ENCODE measurements at regions of chr3 and their contacts with region 1.

Region 1: DNA sequence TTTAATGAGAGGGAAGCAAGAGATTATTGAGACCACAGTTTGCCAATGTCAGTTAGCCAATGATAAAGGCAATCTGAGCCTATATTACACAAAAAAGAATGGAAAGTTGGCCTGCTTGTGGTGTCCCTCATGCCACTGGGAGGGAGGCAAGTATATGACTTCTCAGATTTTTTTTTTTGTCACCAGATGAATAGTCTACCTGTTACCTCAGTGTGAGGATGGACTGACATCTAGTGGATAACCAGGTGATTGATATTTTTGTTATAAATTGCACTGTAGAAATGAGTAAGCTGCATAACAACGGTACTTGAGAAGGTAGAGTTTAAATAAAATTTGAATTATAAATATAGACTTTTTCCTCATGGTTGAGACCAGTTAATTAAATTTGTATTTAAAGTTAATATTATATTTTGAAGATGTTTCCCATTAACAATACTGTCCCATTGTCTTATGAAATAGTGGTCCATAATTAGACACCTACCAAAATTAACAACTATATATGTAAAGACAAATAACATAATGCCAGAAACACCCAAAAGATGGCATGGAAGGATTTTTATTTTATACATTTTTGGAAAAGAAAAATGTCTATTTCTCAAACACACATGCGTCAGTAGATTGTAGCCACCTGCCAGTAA is 237.8 kb upstream of the GADL1 start:
- DNase-seq: peak; percentile 38
- H3K4me3 ChIP-seq: no peak overlapping the region
- CTCF ChIP-seq: peak; percentile 41

Region 2: DNA sequence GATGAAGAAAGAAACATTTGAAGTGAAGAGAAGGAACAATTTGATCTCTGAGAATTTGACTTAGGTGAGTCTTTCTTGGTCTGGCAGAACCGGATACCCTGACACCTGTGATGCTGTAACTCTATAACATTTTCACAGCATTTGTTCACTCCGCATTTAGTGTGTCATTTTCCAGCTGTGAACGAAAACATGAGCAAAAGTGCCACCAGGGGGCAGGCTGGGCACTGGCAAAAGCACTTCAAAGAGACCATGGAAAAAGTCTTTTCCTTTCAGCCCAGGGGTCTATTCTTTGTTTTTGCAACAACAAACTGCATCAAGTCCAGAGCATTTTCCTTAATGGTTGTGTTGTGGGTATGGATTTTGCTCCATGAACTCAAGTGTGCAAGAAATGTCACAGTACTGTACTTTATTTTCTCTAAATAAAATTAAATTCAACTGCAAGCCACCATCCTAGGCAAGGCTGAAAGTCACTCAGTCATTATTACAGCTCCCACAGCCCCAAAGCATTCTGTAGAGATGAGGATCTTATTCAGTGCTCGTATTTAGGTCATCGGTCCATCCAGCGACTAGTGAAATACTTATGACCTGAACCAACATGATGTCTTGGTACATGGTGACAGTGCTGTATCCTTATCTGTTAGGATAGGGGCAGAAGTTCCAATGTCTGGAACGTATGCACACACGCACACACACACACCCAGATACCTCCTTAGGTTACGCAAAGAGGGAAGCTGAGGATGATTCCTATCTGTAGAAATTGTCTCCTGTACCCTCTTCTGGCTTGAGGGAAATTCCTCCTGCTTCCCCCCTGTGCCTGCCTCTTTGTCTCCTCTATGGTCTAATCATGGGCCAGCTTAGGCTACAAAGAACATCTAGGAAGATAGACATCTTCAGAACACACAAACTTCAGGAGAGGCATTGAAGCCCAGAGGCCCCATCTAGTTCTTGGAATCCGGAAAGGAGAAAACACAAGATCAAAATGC is 363.3 kb before region 1 on chr3:
- in situ Hi-C with region 1: loop called (anchors 25 kb)
- DNase-seq: peak; percentile 56
- H3K4me3 ChIP-seq: no peak overlapping the region
- CTCF ChIP-seq: peak; percentile 86

Region 3: GRCh38 chr3:31077021-31077601 is 55.1 kb before region 1 on chr3:
- in situ Hi-C with region 1: no loop called
- DNase-seq: peak; percentile 31
- H3K4me3 ChIP-seq: no peak overlapping the region
- CTCF ChIP-seq: no peak